ENCODE measurements at regions of chr11 and their contacts with region 1.

Region 1: GRCh38 chr11:59560702-59561469 is 49.5 kb downstream of the OR4D9 start:
- DNase-seq: peak; percentile 88 to 92
- H3K4me3 ChIP-seq: peak overlapping the region; percentile 64
- H3K4me3 Mint-ChIP-seq: peak overlapping the region; percentile 75
- H3K27ac Mint-ChIP-seq: peak overlapping the region; percentile 74
- H3K4me1 ChIP-seq: peaks cover 8% of the 10 kb centered on the region; the same call in 1 of the 2 replicates
- H3K4me1 Mint-ChIP-seq: peaks cover 19% of the 10 kb centered on the region
- H3K27me3 ChIP-seq: no peaks in the 10 kb centered on the region
- H3K27me3 Mint-ChIP-seq: no peaks in the 10 kb centered on the region
- CTCF ChIP-seq: no peak

Region 2: DNA sequence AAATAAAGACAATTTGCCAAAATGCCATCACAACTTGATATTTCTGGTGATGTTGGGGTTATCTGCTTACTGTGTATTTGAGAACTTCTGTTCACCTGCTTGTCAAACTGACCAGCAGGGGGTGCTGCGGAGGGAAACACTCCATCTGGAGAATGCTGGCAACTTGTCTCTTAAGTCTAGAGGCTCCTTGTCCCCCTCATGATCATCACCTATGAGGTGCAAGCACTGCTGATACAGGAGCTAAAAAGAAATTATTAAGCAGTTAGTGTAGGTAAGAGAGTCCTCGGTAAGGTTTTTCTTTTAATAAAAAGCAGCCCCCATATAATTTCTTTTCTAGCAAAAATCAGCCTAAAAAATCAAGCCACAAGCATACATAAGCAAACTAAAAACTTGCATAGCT is 507.5 kb before region 1 on chr11:
- CTCF ChIA-PET with region 1: no interaction called
- POLR2A ChIA-PET with region 1: no interaction called
- intact Hi-C with region 1: no loop called
- DNase-seq: peak in 1 of 2 experiments; percentile 71
- H3K4me3 ChIP-seq: no peak overlapping the region
- H3K4me3 Mint-ChIP-seq: no peak overlapping the region
- H3K27ac Mint-ChIP-seq: no peak overlapping the region
- H3K4me1 ChIP-seq: no peaks in the 10 kb centered on the region
- H3K4me1 Mint-ChIP-seq: peaks cover 12% of the 10 kb centered on the region
- H3K27me3 ChIP-seq: no peaks in the 10 kb centered on the region
- H3K27me3 Mint-ChIP-seq: no peaks in the 10 kb centered on the region
- CTCF ChIP-seq: peak; percentile 53 to 57

Region 3: GRCh38 chr11:59550368-59550841 is 10.5 kb before region 1 on chr11:
- CTCF ChIA-PET with region 1: interaction called, 4 read pairs
- POLR2A ChIA-PET with region 1: interaction called, 4 read pairs
- intact Hi-C with region 1: loop called (anchors 1 kb)
- DNase-seq: peak; percentile 96 to 97
- H3K4me3 ChIP-seq: peak overlapping the region; percentile 58
- H3K4me3 Mint-ChIP-seq: peak overlapping the region; percentile 80
- H3K27ac Mint-ChIP-seq: peak overlapping the region; percentile 100
- H3K4me1 ChIP-seq: peaks cover 28% of the 10 kb centered on the region
- H3K4me1 Mint-ChIP-seq: peaks cover 32% of the 10 kb centered on the region
- H3K27me3 ChIP-seq: no peaks in the 10 kb centered on the region
- H3K27me3 Mint-ChIP-seq: peaks cover 7% of the 10 kb centered on the region
- CTCF ChIP-seq: peak; percentile 28 to 63

Measured in Caco-2 (cell line).